Prostate gland (tissue), 2 donors: ENCODE measurements at regions of chrX and their contacts with region 1.

Region 1: DNA sequence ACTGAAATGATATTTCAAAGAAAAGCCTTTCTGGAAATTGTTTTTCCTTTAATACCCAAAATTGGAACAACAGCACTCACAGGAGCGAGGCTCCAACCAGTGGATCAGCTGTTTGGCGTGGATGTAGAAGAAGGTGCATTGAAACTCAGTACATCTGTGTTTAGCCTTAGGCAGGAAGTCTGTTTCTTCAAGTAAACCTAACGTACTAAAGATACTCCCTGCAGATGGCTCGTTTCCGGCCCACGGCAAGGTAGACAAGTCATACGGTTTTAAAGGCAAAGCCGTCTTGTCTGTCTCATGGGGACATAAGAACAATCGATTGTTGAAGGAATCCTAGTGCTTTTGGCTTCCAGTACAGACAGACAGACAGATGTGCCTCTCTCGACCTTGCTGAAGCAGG is 50.0 kb upstream of the CLCN4 start:
- DNase-seq: no peak
- H3K4me3 ChIP-seq: no peak overlapping the region
- H3K27ac ChIP-seq: no peak overlapping the region
- H3K4me1 ChIP-seq: no peaks in the 10 kb centered on the region
- H3K27me3 ChIP-seq: no peaks in the 10 kb centered on the region
- CTCF ChIP-seq: no peak
- POLR2A ChIP-seq: no peak

Region 2: DNA sequence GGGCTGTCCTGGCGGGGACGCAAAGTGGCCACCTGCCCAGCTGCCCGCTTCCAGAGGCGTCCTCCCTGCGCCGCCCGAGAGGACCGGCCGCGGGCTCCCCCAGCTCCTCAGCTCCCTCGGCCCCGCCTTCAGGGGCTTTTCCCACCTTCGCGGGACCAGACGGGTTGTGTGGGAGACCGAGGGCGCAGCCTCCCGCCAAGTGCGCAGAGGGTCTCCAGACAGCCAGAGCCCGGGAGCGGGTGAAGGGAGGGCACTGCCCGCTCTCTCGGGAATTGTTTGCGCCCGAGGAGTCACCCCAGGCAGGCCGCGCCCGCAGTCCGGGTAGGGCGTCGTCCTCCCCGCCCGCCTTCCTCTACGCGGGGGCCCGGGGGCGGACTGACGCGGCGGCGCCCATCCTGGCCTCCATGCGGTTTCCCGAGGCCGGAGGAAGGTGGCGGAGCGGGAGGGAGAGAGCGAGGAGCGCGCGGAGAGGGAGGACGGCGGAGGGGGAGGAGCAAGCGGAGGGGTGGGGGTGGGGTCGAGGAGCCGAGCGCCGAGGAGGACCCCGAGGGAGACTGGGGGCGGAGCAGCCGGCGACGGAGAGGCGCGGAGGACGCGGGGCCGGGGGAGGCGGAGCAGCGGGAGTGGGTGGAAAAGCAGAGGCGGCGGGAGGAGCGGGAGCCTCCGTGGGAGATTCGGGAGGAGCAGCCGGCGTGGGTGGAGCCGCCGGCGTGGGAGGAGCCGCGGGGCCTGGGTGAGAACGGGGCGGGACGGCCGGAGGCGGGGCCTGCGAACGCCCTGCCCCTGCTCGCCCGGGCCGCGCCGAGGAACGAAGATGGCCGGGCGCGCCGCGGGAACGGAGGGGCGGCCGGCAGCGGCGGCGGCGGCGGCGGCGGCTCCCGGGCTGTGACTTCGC is 92.1 kb before region 1 on chrX:
- intact Hi-C with region 1: loop called (anchors 5 kb)
- DNase-seq: peak; percentile 83
- H3K4me3 ChIP-seq: peak overlapping the region; percentile 44 to 46
- H3K27ac ChIP-seq: peak overlapping the region; percentile 88 to 89
- H3K4me1 ChIP-seq: no peaks in the 10 kb centered on the region
- H3K27me3 ChIP-seq: no peaks in the 10 kb centered on the region
- CTCF ChIP-seq: no peak
- POLR2A ChIP-seq: peak; percentile 45

Region 3: GRCh38 chrX:10217198-10217597 is 110.4 kb after region 1 on chrX:
- intact Hi-C with region 1: no loop called
- DNase-seq: no peak
- H3K4me3 ChIP-seq: no peak overlapping the region
- H3K27ac ChIP-seq: no peak overlapping the region
- H3K4me1 ChIP-seq: no peaks in the 10 kb centered on the region
- H3K27me3 ChIP-seq: no peaks in the 10 kb centered on the region
- CTCF ChIP-seq: no peak
- POLR2A ChIP-seq: no peak